Vagina (tissue), 2 donors: ENCODE measurements at regions of chr16 and their contacts with region 1.

Region 1: GRCh38 chr16:84726079-84726668 is 26.4 kb downstream of the USP10 start:
- DNase-seq: peak in 1 of 2 donors; percentile 88
- H3K4me3 ChIP-seq: no peak overlapping the region
- H3K27ac ChIP-seq: peak overlapping the region; percentile 24
- H3K4me1 ChIP-seq: peaks cover 60% of the 10 kb centered on the region
- H3K27me3 ChIP-seq: no peaks in the 10 kb centered on the region
- CTCF ChIP-seq: peak; percentile 72 to 95 (median 89)
- POLR2A ChIP-seq: no peak

Region 2: GRCh38 chr16:82945420-82946101 is 1780.6 kb before region 1 on chr16:
- intact Hi-C with region 1: no loop called
- DNase-seq: no peak
- H3K4me3 ChIP-seq: no peak overlapping the region
- H3K27ac ChIP-seq: no peak overlapping the region
- H3K4me1 ChIP-seq: no peaks in the 10 kb centered on the region
- H3K27me3 ChIP-seq: no peaks in the 10 kb centered on the region
- CTCF ChIP-seq: no peak
- POLR2A ChIP-seq: no peak

Region 3: GRCh38 chr16:84511180-84511824 is 214.9 kb before region 1 on chr16:
- intact Hi-C with region 1: loop called (anchors 5 kb)
- DNase-seq: no peak
- H3K4me3 ChIP-seq: no peak overlapping the region
- H3K27ac ChIP-seq: no peak overlapping the region
- H3K4me1 ChIP-seq: peaks cover 5% of the 10 kb centered on the region
- H3K27me3 ChIP-seq: no peaks in the 10 kb centered on the region
- CTCF ChIP-seq: peak; percentile 84 to 95 (median 93)
- POLR2A ChIP-seq: no peak

Region 4: DNA sequence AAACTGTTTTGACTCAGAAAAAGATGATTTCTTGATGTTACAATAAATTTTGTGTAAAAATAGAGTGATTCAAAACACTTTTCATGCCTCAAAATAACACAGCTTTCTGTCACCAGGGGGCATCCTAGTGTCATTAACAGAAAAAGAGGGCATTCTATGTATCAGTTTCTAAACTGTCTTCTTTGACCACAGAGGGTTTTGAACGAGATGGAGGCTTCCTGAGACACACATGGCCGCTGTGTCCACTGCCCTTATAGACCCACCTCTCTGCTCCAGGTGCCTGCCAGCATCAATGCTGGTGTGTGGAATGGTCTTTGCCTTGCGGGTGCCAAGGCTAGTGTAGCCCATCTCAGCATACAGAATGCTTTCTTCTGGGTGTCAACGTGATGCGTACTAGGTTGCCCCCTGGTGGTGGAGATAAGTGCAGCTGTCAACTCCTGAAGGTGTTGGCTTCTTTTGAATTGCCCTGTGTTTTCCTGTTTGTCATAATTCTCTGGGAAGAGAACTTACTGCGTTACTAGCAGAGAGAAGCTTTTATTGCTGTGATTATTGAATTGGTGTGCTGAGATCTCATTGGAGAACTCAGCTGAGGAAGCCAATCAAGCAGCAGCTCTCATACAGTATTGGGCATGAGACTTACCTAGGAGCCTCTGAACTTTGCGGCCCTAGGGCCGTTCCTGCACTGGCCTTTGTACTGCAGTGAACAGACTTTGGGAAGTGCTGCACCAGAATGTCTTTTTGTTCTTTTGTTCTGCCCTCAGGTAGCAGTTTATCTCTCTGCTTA is 12.3 kb after region 1 on chr16:
- intact Hi-C with region 1: no loop called
- DNase-seq: peak in 1 of 2 donors; percentile 89
- H3K4me3 ChIP-seq: no peak overlapping the region
- H3K27ac ChIP-seq: peak overlapping the region; percentile 67
- H3K4me1 ChIP-seq: peaks cover 73% of the 10 kb centered on the region
- H3K27me3 ChIP-seq: no peaks in the 10 kb centered on the region
- CTCF ChIP-seq: peak; percentile 53 to 80 (median 75)
- POLR2A ChIP-seq: no peak

Region 5: GRCh38 chr16:84836234-84836647 is 110.1 kb after region 1 on chr16:
- intact Hi-C with region 1: no loop called
- DNase-seq: no peak
- H3K4me3 ChIP-seq: peak overlapping the region in 1 of 2 donors; percentile 1
- H3K27ac ChIP-seq: peak overlapping the region; percentile 95
- H3K4me1 ChIP-seq: peaks cover 76% of the 10 kb centered on the region
- H3K27me3 ChIP-seq: no peaks in the 10 kb centered on the region
- CTCF ChIP-seq: no peak
- POLR2A ChIP-seq: no peak